IMR-90 (cell line): ENCODE measurements at regions of chr4 and their contacts with region 1.

Region 1: DNA sequence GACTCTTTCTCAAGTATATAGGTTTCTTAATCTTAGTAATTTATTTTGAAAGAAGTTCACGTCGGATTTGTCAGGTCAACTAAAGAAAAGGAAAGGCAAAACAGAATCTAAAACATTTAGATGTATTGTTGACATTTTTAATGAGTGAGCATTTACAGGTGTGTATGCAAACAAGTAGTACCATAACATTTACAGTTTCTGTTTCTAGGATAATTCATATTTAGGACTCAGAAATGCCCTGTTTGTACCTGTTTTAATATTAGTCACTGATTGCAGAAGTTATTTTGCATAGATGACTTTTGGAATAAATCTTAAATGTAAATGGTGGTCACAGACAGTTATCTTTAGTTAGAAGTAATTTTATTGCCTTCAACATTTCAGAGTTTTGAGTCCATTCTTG is 151.3 kb upstream of the NUDT6 start:
- DNase-seq: no peak
- ATAC-seq: no peak
- H3K4me3 ChIP-seq: no peak overlapping the region
- H3K27ac ChIP-seq: no peak overlapping the region
- H3K4me1 ChIP-seq: peaks cover 1% of the 10 kb centered on the region; the same call in 1 of the 2 replicates
- H3K27me3 ChIP-seq: no peaks in the 10 kb centered on the region
- CTCF ChIP-seq: no peak
- POLR2A ChIP-seq: no peak
- RAD21 ChIP-seq: no peak

Region 2: GRCh38 chr4:122963216-122963615 is 110.4 kb before region 1 on chr4:
- CTCF ChIA-PET with region 1: no interaction called
- POLR2A ChIA-PET with region 1: no interaction called
- dilution Hi-C with region 1: no loop called
- in situ Hi-C with region 1: no loop called
- intact Hi-C with region 1: loop called (anchors 10 kb)
- DNase-seq: peak; percentile 45
- ATAC-seq: no peak
- H3K4me3 ChIP-seq: no peak overlapping the region
- H3K27ac ChIP-seq: no peak overlapping the region
- H3K4me1 ChIP-seq: peaks cover under 1% of the 10 kb centered on the region
- H3K27me3 ChIP-seq: no peaks in the 10 kb centered on the region
- CTCF ChIP-seq: no peak
- POLR2A ChIP-seq: no peak
- RAD21 ChIP-seq: no peak

Region 3: DNA sequence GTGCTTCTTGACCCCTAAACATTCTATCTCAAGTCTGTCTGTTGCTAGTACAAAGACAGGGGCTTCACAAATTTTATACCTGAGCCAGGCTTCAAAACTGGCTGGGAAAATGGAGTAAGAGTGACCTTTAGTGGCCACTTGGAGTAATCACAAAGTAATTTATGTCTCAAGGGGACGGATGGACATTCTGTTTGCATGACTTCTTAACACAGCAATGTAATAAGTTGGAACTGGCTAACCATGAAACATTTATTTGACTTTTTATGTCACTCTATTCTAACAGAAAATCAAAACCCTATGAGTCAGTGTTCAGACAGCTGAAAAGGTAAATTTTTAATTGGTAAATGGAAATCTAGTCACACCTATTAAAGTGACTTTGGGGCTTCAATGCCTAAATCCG is 1038.3 kb after region 1 on chr4:
- CTCF ChIA-PET with region 1: no interaction called
- POLR2A ChIA-PET with region 1: no interaction called
- dilution Hi-C with region 1: no loop called
- in situ Hi-C with region 1: no loop called
- intact Hi-C with region 1: no loop called
- DNase-seq: peak; percentile 87
- ATAC-seq: peak; percentile 88
- H3K4me3 ChIP-seq: no peak overlapping the region
- H3K27ac ChIP-seq: no peak overlapping the region
- H3K4me1 ChIP-seq: no peaks in the 10 kb centered on the region; the same call in 1 of the 2 replicates
- H3K27me3 ChIP-seq: no peaks in the 10 kb centered on the region
- CTCF ChIP-seq: peak; percentile 82
- POLR2A ChIP-seq: no peak
- RAD21 ChIP-seq: peak; percentile 92